A549 (cell line): ENCODE measurements at regions of chr20 and their contacts with region 1.

Region 1: GRCh38 chr20:5735845-5736525 is 14.2 kb upstream of the SHLD1 start:
- DNase-seq: peak in 1 of 2 experiments; percentile 35
- ATAC-seq: no peak
- H3K4me3 ChIP-seq: no peak overlapping the region
- H3K27ac ChIP-seq: peak overlapping the region; percentile 91 to 93
- H3K4me1 ChIP-seq: peaks cover 65% of the 10 kb centered on the region
- CTCF ChIP-seq: no peak
- EP300 ChIP-seq: no peak
- POLR2A ChIP-seq: no peak
- RAD21 ChIP-seq: no peak

Region 2: DNA sequence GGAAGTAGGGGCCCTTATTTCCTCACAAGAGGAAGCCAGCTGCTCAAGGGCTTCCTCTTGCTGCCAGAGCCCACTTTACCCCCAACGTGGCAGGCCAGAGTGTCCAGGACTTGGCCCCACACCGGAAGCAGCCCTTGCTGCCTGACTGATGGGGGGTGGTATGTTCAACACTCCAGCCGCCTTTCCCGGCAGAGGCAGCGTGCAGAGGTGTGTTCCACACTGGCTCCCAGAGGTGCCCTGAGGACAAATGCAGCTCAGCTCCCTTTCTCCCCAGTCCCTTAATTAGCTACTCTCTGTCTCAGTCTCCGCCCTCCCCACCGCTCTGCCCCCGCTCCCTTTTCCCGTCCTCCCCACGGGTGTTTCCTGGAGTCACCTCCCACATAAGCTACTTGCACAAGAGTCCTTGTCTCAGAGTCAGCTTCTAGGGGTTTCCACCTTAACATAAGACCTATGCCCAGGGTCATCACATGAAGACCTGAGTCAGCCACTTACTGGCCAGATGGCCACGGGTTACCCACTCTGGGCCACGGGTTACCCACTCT is 47.5 kb before region 1 on chr20:
- CTCF ChIA-PET with region 1: no interaction called
- POLR2A ChIA-PET with region 1: no interaction called
- DNase-seq: no peak
- ATAC-seq: 0 out of 6 replicates have a peak, but pooled peaks of 1 of the 2 experiments have one; percentile 32
- H3K4me3 ChIP-seq: no peak overlapping the region
- H3K27ac ChIP-seq: peak overlapping the region; percentile 23 to 34; a peak in 5 of 6 replicates
- H3K4me1 ChIP-seq: no peaks in the 10 kb centered on the region
- CTCF ChIP-seq: no peak
- EP300 ChIP-seq: no peak
- POLR2A ChIP-seq: no peak
- RAD21 ChIP-seq: no peak

Region 3: GRCh38 chr20:5719861-5720401 is 16.1 kb before region 1 on chr20:
- CTCF ChIA-PET with region 1: interaction called, 10 read pairs
- POLR2A ChIA-PET with region 1: no interaction called
- DNase-seq: peak in 1 of 2 experiments; percentile 65
- ATAC-seq: peak; percentile 55 to 56; a peak in 4 of 6 replicates
- H3K4me3 ChIP-seq: no peak overlapping the region
- H3K27ac ChIP-seq: peak overlapping the region; percentile 40 to 91; a peak in 5 of 6 replicates
- H3K4me1 ChIP-seq: peaks cover 43% of the 10 kb centered on the region
- CTCF ChIP-seq: no peak
- EP300 ChIP-seq: no peak
- POLR2A ChIP-seq: no peak
- RAD21 ChIP-seq: peak in 1 of 2 experiments; percentile 22; a peak in 1 of 5 replicates

Region 4: GRCh38 chr20:5757949-5758348 is 22.0 kb after region 1 on chr20:
- CTCF ChIA-PET with region 1: no interaction called
- POLR2A ChIA-PET with region 1: no interaction called
- DNase-seq: no peak
- ATAC-seq: peak; percentile 59 to 62; a peak in 5 of 6 replicates
- H3K4me3 ChIP-seq: no peak overlapping the region
- H3K27ac ChIP-seq: no peak overlapping the region
- H3K4me1 ChIP-seq: peaks cover 4% of the 10 kb centered on the region; the same call in 2 of the 3 replicates
- CTCF ChIP-seq: no peak
- EP300 ChIP-seq: no peak
- POLR2A ChIP-seq: no peak
- RAD21 ChIP-seq: no peak